ENCODE measurements at regions of chr10 and their contacts with region 1.

Region 1: DNA sequence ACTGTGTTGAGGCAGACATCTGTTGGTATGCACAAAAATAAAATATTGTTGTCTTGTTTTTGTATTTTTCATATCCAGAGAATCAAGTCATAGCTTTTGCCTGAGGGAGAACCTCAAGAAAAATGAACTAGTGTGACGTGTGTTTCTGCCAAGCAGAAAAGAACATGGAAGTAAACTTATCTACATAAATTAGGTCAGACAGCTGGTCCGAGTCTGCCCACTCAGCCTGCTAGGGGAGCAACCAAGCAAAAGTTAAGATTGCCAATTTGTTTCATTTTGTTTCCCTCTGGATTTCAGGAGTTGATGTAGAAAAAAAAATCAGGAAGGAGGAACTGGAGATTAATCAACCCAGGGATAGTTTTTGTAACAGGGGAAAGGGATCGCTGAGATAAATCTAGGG is 572.4 kb upstream of the LRRTM3 start:
- DNase-seq: no peak
- H3K4me3 ChIP-seq: no peak overlapping the region
- H3K27ac ChIP-seq: no peak overlapping the region
- H3K4me1 ChIP-seq: no peaks in the 10 kb centered on the region
- H3K27me3 ChIP-seq: no peaks in the 10 kb centered on the region
- CTCF ChIP-seq: no peak

Region 2: GRCh38 chr10:66892871-66893270 is 539.4 kb after region 1 on chr10:
- CTCF ChIA-PET with region 1: interaction called, 15 read pairs
- dilution Hi-C with region 1: no loop called
- in situ Hi-C with region 1: no loop called
- intact Hi-C with region 1: no loop called
- DNase-seq: no peak
- H3K4me3 ChIP-seq: no peak overlapping the region
- H3K27ac ChIP-seq: no peak overlapping the region
- H3K4me1 ChIP-seq: no peaks in the 10 kb centered on the region
- H3K27me3 ChIP-seq: no peaks in the 10 kb centered on the region
- CTCF ChIP-seq: no peak